Dendritic cell treated with granulocyte-macrophage colony-stimulating factor and Interleukin-4, amounts not matched to agents 40 ng/mL and 50 ng/mL, for 4 days (primary cell): ENCODE measurements at regions of chr5 and their contacts with region 1.

Region 1: GRCh38 chr5:923281-923873 is 30.7 kb downstream of the TRIP13 start:
- H3K4me3 Mint-ChIP-seq: no peak overlapping the region
- H3K27ac Mint-ChIP-seq: no peak overlapping the region
- H3K4me1 Mint-ChIP-seq: peaks cover 6% of the 10 kb centered on the region
- H3K27me3 Mint-ChIP-seq: peaks cover 45% of the 10 kb centered on the region

Region 2: GRCh38 chr5:308672-309271 is 614.6 kb before region 1 on chr5:
- intact Hi-C with region 1: no loop called
- H3K4me3 Mint-ChIP-seq: no peak overlapping the region
- H3K27ac Mint-ChIP-seq: no peak overlapping the region
- H3K4me1 Mint-ChIP-seq: no peaks in the 10 kb centered on the region
- H3K27me3 Mint-ChIP-seq: no peaks in the 10 kb centered on the region

Region 3: GRCh38 chr5:1174122-1174936 is 251.0 kb after region 1 on chr5:
- intact Hi-C with region 1: loop called (anchors 2 kb)
- H3K4me3 Mint-ChIP-seq: no peak overlapping the region
- H3K27ac Mint-ChIP-seq: no peak overlapping the region
- H3K4me1 Mint-ChIP-seq: no peaks in the 10 kb centered on the region
- H3K27me3 Mint-ChIP-seq: peaks cover 20% of the 10 kb centered on the region

Region 4: GRCh38 chr5:1666812-1667588 is 743.6 kb after region 1 on chr5:
- intact Hi-C with region 1: loop called (anchors 10 kb)
- H3K4me3 Mint-ChIP-seq: no peak overlapping the region
- H3K27ac Mint-ChIP-seq: no peak overlapping the region
- H3K4me1 Mint-ChIP-seq: no peaks in the 10 kb centered on the region
- H3K27me3 Mint-ChIP-seq: peaks cover 51% of the 10 kb centered on the region